Psoas muscle (tissue), 8 donors: ENCODE measurements at regions of chr5 and their contacts with region 1.

Region 1: DNA sequence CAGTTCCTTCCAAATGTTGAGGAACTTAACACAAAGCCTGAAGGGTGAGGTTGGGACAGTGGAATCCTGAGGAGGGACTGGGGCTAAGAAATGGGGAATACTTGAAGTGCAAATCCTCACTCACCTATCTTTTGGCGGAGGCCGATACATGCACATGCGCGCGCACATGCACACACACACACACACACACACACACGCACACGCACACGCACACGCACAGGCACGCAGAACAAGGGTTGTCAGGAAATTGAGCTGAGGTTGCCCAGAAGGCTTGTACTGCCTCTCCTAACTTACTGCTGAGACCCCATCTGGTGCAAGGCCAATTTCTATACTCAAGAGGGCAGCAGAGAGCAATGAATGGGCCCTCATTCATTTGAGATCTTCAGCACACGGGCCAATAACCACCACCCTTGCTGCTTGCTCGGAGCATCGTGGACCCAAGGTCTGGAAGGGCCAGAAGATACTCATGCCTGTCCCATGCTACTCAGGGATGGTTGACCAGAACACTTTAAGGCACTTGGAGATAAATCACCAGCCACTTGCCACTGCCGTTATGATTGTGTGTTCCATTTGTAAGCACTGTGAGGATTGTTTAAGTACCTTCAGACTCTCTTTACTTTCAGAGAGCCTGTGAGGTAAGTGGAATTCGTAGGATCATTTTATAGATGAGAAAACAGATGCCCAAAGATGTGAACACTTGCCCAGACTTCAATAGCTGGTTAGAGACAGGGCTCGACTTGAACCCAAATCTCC is 21.5 kb downstream of the BTF3 start:
- DNase-seq: peak; percentile 24 to 52
- ATAC-seq: peak; percentile 68 to 96 (median 88)
- H3K4me3 ChIP-seq: no peak overlapping the region
- H3K27ac ChIP-seq: no peak overlapping the region
- H3K4me1 ChIP-seq: no peaks in the 10 kb centered on the region
- H3K27me3 ChIP-seq: no peaks in the 10 kb centered on the region
- CTCF ChIP-seq: peak; percentile 67

Region 2: GRCh38 chr5:73534011-73534644 is 14.4 kb after region 1 on chr5:
- intact Hi-C with region 1: loop called in 1 of 2 experiments (anchors 2 kb)
- DNase-seq: no peak
- ATAC-seq: no peak
- H3K4me3 ChIP-seq: no peak overlapping the region
- H3K27ac ChIP-seq: no peak overlapping the region
- H3K4me1 ChIP-seq: no peaks in the 10 kb centered on the region
- H3K27me3 ChIP-seq: no peaks in the 10 kb centered on the region
- CTCF ChIP-seq: no peak